ENCODE measurements at regions of chr9 and their contacts with region 1.

Region 1: DNA sequence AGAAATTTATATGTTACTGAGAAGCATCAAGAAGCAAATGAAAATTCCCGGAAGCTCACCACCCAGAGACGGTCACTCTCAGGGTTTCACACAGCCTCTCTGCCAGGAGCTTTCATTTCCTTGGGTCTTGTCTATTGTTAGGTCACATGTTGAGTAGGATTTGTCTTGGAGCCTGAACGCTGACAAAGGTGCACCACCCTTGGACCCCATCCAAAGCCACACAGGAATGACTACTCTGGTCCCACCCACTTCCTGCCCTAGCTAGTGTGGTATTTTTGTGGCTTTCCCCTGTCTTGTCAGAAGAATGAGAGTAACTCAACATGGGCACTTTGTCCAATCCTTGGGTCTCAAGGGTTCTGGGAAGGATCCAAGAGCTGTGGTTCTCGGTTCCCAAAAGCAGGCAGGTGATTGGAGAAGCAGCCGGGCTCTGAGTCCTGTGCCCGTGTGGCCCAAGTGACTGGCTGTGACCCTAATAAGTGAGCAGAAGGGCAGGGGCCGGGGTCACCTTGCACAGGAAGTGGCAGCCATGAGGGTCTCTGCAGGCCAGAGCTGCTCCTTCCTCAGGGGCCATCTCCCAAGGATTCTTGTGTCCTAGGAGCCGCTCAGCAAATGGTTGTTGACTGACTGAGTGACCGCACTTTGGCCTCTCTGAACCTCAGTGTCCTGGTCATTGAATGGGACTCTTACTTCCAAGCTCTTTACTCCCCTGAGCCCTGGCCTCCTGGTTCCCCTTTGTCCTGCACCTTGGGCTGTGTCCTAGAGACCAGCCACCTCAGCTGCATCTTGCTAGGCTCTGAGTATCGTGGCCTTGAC is 6.9 kb downstream of the FGD3 start:
- DNase-seq: peak; percentile 90
- H3K4me3 ChIP-seq: peak overlapping the region; percentile 35; the same call in 1 of the 2 replicates
- H3K27ac ChIP-seq: peak overlapping the region; percentile 96
- H3K4me1 ChIP-seq: peaks cover 52% of the 10 kb centered on the region
- H3K27me3 ChIP-seq: no peaks in the 10 kb centered on the region
- CTCF ChIP-seq: no peak

Region 2: GRCh38 chr9:92616655-92617111 is 337.6 kb before region 1 on chr9:
- CTCF ChIA-PET with region 1: no interaction called
- POLR2A ChIA-PET with region 1: interaction called, 13 read pairs
- intact Hi-C with region 1: no loop called
- DNase-seq: no peak
- H3K4me3 ChIP-seq: no peak overlapping the region
- H3K27ac ChIP-seq: no peak overlapping the region
- H3K4me1 ChIP-seq: no peaks in the 10 kb centered on the region
- H3K27me3 ChIP-seq: no peaks in the 10 kb centered on the region
- CTCF ChIP-seq: no peak

Region 3: GRCh38 chr9:92808726-92809451 is 145.4 kb before region 1 on chr9:
- CTCF ChIA-PET with region 1: no interaction called
- POLR2A ChIA-PET with region 1: no interaction called
- intact Hi-C with region 1: loop called (anchors 5 kb)
- DNase-seq: peak; percentile 58 to 88
- H3K4me3 ChIP-seq: peak overlapping the region; percentile 53; the same call in 1 of the 2 replicates
- H3K27ac ChIP-seq: no peak overlapping the region
- H3K4me1 ChIP-seq: no peaks in the 10 kb centered on the region
- H3K27me3 ChIP-seq: no peaks in the 10 kb centered on the region
- CTCF ChIP-seq: peak; percentile 29; the same call in 1 of the 2 replicates

Region 4: GRCh38 chr9:92970467-92970923 is 16.2 kb after region 1 on chr9:
- CTCF ChIA-PET with region 1: interaction called, 6 read pairs
- POLR2A ChIA-PET with region 1: interaction called, 13 read pairs
- intact Hi-C with region 1: loop called (anchors 1 kb)
- DNase-seq: peak; percentile 76 to 85
- H3K4me3 ChIP-seq: no peak overlapping the region
- H3K27ac ChIP-seq: peak overlapping the region; percentile 30; the same call in 1 of the 2 replicates
- H3K4me1 ChIP-seq: peaks cover 54% of the 10 kb centered on the region
- H3K27me3 ChIP-seq: no peaks in the 10 kb centered on the region
- CTCF ChIP-seq: no peak

Region 5: DNA sequence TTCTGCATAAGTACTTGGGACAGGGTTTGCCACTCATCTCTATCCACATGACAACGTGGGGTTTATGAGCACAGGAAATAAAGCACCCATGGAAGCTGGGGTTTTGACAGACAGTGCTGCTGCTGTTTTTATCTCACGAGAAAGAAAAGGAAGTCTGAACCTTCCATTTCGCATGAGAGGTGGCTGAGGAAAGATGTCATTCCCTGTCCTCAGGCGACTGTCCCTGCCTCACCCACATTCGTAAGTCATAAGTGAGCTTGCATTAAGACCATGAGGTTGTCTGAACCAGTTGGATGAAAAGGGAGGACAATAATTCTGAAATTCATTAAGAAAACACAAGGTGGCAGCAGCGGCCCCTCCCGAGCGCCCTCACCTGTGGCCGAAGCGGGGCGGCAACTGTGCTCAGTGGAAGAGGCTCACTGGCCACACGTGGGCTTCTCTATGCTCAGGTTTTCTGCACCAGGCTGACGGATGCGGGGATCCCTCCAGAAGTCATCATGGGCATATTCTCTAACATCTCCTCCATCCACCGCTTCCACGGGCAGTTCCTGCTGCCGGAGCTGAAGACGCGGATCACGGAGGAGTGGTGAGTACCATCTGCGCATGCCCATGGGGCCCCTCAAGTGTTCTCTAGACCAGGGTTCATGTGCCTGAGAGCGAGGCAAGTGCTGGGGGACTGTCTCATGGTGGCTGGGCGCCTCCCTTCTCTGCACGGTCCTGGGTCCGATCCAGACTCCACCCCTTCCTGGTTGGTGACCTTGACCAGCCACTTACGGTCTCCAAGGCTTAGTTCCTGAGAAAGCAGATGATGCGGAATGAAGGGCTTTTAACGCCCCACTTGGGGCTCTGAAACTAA is 49.5 kb after region 1 on chr9:
- CTCF ChIA-PET with region 1: interaction called, 7 read pairs
- POLR2A ChIA-PET with region 1: no interaction called
- intact Hi-C with region 1: loop called (anchors 1 kb)
- DNase-seq: peak; percentile 58 to 72
- H3K4me3 ChIP-seq: no peak overlapping the region
- H3K27ac ChIP-seq: peak overlapping the region; percentile 62
- H3K4me1 ChIP-seq: peaks cover 13% of the 10 kb centered on the region
- H3K27me3 ChIP-seq: no peaks in the 10 kb centered on the region
- CTCF ChIP-seq: peak; percentile 79

Region 6: GRCh38 chr9:93026640-93027039 is 72.4 kb after region 1 on chr9:
- CTCF ChIA-PET with region 1: no interaction called
- POLR2A ChIA-PET with region 1: no interaction called
- intact Hi-C with region 1: no loop called
- DNase-seq: no peak
- H3K4me3 ChIP-seq: no peak overlapping the region
- H3K27ac ChIP-seq: no peak overlapping the region
- H3K4me1 ChIP-seq: no peaks in the 10 kb centered on the region
- H3K27me3 ChIP-seq: no peaks in the 10 kb centered on the region
- CTCF ChIP-seq: no peak

Region 7: DNA sequence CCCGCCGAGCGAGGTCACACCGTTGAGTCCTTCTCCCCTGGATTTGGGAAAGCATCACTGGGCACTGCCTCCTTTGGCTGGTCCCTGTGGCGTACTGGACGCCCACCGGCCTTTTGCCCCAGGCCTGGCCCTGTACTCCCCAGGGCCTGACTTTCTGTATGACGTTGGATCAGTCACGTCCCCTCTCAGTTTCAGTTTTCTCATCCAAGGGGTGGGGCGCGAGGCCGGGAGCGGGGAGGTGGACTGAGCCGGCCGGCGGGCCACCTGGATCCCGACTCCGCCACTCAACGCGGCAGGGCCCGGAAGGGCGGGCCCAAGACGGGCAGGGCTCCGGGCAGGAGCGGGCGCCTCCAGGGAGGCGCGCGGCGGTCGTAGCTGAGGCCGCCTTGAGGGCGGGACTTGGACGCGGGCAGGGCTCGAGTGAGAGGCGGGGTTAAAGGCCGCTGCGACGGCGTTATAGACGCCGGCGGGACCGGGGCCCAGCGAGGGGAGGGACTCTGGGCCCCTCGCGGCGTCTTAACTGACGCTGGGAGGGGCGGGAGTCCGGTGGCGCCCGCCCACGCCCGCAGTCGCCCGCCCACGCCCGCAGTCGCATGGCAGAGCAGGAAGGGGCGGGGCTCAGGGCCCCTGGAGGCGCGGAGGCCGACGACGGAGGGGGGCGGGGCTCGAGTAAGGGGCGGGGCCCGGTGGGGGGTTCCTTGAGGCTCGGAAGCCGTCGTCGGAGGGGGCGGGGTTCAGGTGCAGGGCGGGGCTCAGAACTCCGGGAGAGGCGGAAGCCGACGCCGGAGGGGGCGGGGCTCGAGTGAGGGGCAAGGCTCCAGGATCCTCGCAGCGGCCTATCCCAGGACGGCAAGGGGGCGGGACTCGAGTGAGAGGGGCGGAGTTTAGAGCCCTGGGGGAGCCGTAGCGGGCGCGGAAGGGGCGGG is 141.2 kb after region 1 on chr9:
- CTCF ChIA-PET with region 1: no interaction called
- POLR2A ChIA-PET with region 1: no interaction called
- intact Hi-C with region 1: loop called (anchors 2 kb)
- DNase-seq: peak; percentile 90 to 100
- H3K4me3 ChIP-seq: peak overlapping the region; percentile 90; the same call in 1 of the 2 replicates
- H3K27ac ChIP-seq: peak overlapping the region; percentile 82
- H3K4me1 ChIP-seq: peaks cover 57% of the 10 kb centered on the region
- H3K27me3 ChIP-seq: no peaks in the 10 kb centered on the region
- CTCF ChIP-seq: no peak

Region 8: GRCh38 chr9:93302551-93303257 is 348.4 kb after region 1 on chr9:
- CTCF ChIA-PET with region 1: interaction called, 6 read pairs
- POLR2A ChIA-PET with region 1: no interaction called
- intact Hi-C with region 1: loop called (anchors 1 kb)
- DNase-seq: peak; percentile 61 to 77
- H3K4me3 ChIP-seq: no peak overlapping the region
- H3K27ac ChIP-seq: no peak overlapping the region
- H3K4me1 ChIP-seq: no peaks in the 10 kb centered on the region
- H3K27me3 ChIP-seq: no peaks in the 10 kb centered on the region
- CTCF ChIP-seq: peak; percentile 84